ENCODE measurements at regions of chr6 and their contacts with region 1.

Region 1: DNA sequence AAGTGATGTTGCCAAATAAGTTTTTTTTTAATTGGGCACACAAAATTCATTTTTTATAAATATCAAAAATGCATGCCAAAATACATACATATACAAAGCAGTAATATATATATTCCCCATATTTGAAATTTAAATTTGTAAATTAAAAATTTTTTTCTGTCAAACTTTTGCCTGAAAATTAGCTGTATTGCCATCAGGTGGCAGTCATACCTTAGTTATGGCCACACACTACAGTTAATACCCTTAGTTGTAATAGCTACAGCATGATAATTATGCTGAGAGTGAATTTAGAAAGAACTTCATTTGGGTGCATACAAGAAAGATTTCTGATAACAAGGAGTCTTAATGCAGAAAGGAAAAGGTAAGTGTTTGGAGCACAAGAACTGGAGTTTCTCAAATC is 46.2 kb upstream of the SDHAF4 start:
- DNase-seq: peak; percentile 22
- ATAC-seq: peak; percentile 29; the same call in 1 of the 2 replicates
- H3K4me3 ChIP-seq: no peak overlapping the region
- H3K27ac ChIP-seq: no peak overlapping the region
- H3K4me1 ChIP-seq: no peaks in the 10 kb centered on the region
- H3K27me3 ChIP-seq: no peaks in the 10 kb centered on the region
- CTCF ChIP-seq: peak; percentile 55

Region 2: GRCh38 chr6:70183538-70183937 is 337.0 kb before region 1 on chr6:
- CTCF ChIA-PET with region 1: no interaction called
- POLR2A ChIA-PET with region 1: no interaction called
- intact Hi-C with region 1: no loop called
- DNase-seq: no peak
- ATAC-seq: no peak
- H3K4me3 ChIP-seq: no peak overlapping the region
- H3K27ac ChIP-seq: no peak overlapping the region
- H3K4me1 ChIP-seq: no peaks in the 10 kb centered on the region
- H3K27me3 ChIP-seq: no peaks in the 10 kb centered on the region
- CTCF ChIP-seq: no peak

Region 3: DNA sequence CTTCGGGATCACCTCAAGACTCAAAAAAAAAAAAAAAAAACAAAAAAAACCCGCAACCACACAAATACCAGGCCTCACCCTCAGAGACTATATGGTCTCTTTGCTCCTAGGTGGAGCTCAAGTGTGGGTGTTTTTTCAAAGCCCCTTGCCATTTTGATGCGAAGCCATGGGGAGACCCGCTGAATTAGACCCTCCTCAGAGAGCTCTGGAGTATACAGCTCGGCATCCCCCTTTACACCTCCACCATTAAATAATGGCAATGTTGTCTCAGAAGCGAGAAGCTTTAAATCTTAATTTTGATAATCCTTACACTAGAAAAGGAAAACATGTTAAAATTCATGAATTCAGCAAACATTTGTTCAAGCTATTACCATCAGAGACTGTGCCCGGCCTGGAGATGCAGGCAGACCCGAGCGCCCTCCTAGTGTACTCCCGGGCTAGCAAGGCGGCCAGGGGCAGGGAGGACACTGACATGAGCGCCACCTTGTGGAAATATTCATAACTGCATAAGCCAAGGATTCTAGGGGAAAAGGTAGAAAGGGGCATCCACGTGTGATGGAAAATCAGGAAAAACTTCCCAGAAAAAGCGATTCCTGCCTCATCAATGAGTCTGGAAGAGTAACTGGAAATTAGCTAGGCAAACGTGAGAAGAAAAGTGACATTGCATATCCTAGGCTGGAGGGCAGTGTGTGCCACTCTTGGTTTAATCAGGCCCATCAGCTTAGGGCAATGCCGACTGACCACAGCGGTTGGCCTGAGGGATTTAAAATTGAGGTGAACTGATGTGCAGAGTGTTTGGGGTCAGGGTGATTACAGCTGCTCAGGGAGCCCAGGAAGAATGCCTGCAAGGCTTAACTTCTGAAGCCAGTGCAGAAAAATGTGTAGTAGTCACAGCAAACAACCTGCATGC is 363.8 kb after region 1 on chr6:
- CTCF ChIA-PET with region 1: interaction called, 3 read pairs
- POLR2A ChIA-PET with region 1: no interaction called
- intact Hi-C with region 1: loop called (anchors 10 kb)
- DNase-seq: peak; percentile 63
- ATAC-seq: peak; percentile 74
- H3K4me3 ChIP-seq: no peak overlapping the region
- H3K27ac ChIP-seq: no peak overlapping the region
- H3K4me1 ChIP-seq: no peaks in the 10 kb centered on the region
- H3K27me3 ChIP-seq: no peaks in the 10 kb centered on the region
- CTCF ChIP-seq: peak; percentile 86